ENCODE measurements at regions of chr9 and their contacts with region 1.

Region 1: DNA sequence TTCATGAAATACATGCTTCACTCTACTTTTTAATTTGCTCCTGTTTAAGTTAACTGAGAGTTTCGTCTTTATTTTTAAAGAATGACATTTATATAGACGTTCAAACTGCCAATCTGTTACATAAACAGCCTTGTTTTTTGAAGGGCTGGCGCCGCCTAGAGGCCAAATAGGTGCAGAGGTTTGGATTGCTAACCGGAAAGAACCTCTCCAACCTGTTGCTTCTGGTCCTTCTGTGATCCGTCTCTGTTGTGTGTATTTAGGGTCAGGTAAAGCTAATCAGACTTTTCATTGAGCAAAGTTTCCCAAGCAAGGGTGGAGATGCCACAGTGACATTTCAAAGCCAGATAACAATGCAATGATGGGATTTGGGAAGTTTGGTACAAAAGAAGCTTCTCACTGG is 39.5 kb upstream of the GLIS3 start:
- DNase-seq: no peak
- H3K4me3 ChIP-seq: no peak overlapping the region
- CTCF ChIP-seq: peak; percentile 76

Region 2: GRCh38 chr9:3732077-3733038 is 607.0 kb before region 1 on chr9:
- CTCF ChIA-PET with region 1: interaction called, 10 read pairs
- POLR2A ChIA-PET with region 1: no interaction called
- DNase-seq: peak; percentile 74
- H3K4me3 ChIP-seq: peak overlapping the region; percentile 29; the same call in 1 of the 2 replicates
- CTCF ChIP-seq: peak; percentile 47

Region 3: DNA sequence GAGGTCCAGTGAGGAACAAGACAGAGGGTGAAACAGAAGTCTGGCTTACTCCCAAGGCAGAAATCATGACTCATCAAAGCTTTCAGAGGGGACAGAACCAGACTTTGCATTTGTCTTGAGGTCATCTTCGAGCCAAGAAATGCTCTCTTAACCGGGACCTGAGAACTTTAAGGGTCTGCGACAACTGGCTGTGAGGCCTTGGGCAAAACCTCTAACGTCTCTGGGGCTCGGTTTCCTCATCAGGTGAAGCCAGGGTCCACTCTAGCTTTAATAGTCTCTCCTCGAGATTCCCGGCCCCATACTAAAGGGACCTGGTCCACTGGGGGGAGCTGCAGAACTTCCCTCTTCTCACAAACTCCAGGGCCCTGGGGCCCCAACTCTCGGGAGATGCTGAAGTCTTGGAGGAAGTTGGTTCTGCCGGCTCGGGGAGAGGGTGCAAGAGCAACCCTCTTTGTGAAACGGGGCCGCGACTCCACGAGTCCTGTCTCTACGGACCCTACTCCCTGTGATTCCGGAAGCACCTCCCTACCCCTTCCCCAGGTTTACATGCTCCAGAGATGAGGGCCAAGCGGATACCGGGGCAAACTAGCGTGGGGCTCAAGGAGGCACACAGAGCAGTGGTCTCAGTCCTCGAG is 42.1 kb before region 1 on chr9:
- CTCF ChIA-PET with region 1: interaction called, 17 read pairs
- POLR2A ChIA-PET with region 1: interaction called, 3 read pairs
- DNase-seq: no peak
- H3K4me3 ChIP-seq: peak overlapping the region; percentile 84
- CTCF ChIP-seq: peak; percentile 58

Region 4: GRCh38 chr9:4306066-4306775 is 33.1 kb before region 1 on chr9:
- CTCF ChIA-PET with region 1: interaction called, 17 read pairs
- POLR2A ChIA-PET with region 1: interaction called, 3 read pairs
- DNase-seq: no peak
- H3K4me3 ChIP-seq: no peak overlapping the region
- CTCF ChIP-seq: no peak

Region 5: DNA sequence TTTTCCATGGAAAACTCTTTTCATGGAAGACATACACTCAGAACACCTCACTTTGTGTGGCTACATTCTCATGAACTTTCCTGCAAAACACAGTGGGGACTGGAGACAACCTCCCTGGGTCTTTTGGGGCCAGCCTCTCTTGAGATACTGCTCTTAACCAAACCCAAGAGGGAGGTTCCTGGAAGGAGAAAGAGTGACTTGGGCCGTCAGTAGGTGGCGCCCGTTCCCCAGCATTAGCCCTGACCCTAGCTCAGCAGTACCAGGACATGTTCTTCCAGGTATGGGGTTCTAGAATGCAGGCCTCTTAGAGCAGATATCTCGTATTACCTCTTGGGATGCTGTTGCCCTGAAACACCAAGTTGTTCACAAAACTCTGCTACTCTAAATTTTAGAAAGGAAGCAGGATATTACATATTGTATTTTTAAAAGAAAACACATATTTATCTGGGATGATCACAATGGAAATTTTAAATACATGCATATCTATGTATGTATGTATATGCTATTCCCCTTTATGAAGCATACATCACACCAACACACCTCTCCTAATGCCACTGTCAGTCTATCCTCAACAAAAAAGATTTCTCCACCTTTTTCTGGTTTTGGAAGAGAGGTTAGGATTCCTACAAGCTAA is 23.7 kb before region 1 on chr9:
- CTCF ChIA-PET with region 1: interaction called, 160 read pairs
- POLR2A ChIA-PET with region 1: no interaction called
- DNase-seq: no peak
- H3K4me3 ChIP-seq: no peak overlapping the region
- CTCF ChIP-seq: peak; percentile 96

Region 6: DNA sequence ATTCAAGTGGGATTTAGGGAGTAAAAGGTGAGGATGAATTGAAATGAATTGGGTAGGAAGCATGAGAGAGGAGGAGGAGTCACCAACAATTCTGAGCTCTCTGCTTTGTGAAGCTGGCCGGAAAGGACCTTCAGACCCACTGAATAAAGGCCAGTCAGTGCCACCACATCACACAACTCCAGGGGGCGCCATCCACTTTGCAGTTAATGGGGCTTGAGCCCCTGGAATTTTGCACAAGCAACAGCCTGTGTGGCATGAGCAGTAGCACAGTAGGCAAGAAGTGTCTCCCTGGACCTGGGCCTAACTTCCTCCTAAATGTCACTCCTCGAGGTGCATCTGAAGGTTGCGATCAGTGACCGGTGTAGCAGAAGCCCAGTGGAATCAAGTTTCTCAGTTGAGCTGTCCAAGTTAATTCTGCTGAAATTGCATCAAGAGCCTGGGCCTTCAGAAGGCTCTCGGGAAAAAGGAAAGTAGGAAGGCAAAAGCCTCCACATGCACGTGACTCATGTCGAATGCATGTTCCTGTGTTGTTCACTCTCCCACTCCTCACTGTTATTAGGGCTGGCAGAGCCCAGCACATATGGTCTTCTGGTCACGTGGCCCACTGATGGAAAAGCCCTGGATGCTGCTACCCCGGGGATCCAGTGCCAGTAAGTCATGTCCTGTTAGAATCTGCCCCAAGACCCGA is 11.7 kb before region 1 on chr9:
- CTCF ChIA-PET with region 1: interaction called, 82 read pairs
- POLR2A ChIA-PET with region 1: no interaction called
- DNase-seq: no peak
- H3K4me3 ChIP-seq: no peak overlapping the region
- CTCF ChIP-seq: no peak

Region 7: GRCh38 chr9:4353236-4353635 is 13.9 kb after region 1 on chr9:
- CTCF ChIA-PET with region 1: interaction called, 20 read pairs
- POLR2A ChIA-PET with region 1: no interaction called
- DNase-seq: no peak
- H3K4me3 ChIP-seq: no peak overlapping the region
- CTCF ChIP-seq: no peak

Region 8: GRCh38 chr9:4382722-4383317 is 43.5 kb after region 1 on chr9:
- CTCF ChIA-PET with region 1: no interaction called
- POLR2A ChIA-PET with region 1: no interaction called
- DNase-seq: no peak
- H3K4me3 ChIP-seq: no peak overlapping the region
- CTCF ChIP-seq: peak; percentile 29

Measured in AG04449 (cell line).